Heart right ventricle (tissue), 16 donors: ENCODE measurements at regions of chr5 and their contacts with region 1.

Region 1: DNA sequence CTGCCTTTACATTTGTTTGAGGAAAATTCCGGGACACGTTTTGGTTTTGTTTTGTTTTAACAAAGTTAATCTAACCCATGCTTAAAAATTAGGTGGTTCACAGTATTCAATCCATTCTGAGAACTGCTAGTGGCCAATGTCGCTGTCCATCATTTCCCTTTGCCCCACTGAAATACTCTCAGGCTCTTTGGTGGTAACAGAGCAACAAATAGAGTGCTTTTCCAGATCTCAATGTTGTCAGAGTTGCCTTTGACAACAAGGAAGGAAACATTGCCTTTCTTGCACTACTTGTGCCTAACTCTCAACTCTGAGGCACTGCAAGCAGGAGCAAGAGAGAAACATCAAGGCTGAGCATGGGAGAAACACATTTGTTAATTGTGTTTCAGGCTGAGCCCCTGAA is 154.0 kb downstream of the MCTP1 start:
- DNase-seq: peak in 1 of 2 donors; percentile 57
- ATAC-seq: peak in 7 of 8 donors; percentile 35 to 85 (median 76)
- H3K4me3 ChIP-seq: no peak overlapping the region
- H3K27ac ChIP-seq: peak overlapping the region in 2 of 10 donors; percentile 18 to 43
- H3K4me1 ChIP-seq: no peaks in the 10 kb centered on the region
- H3K27me3 ChIP-seq: no peaks in the 10 kb centered on the region
- CTCF ChIP-seq: no peak

Region 2: DNA sequence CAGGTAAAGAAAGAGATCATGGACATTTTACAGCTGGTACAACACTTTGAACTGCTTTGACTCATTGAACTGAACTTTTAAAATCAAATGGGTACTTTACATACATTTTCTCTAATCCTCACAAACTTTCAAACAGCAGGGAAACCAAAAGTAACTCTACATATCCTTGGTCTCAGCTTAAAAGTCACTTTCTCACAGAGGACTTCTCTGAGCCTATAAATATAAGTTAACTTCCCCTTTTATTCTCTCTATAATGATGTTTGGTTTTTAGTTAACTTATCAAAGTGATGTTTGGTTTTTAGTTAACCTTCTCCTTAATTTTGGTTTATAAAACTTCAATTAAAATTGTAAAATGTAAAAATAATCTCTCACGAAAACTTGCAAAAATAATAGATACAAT is 55.8 kb before region 1 on chr5:
- intact Hi-C with region 1: loop called in 1 of 10 experiments (anchors 5 kb)
- DNase-seq: no peak
- ATAC-seq: no peak
- H3K4me3 ChIP-seq: no peak overlapping the region
- H3K27ac ChIP-seq: no peak overlapping the region
- H3K4me1 ChIP-seq: peaks cover 0 to 58% (median 4%) of the 10 kb centered on the region in 9 donors
- H3K27me3 ChIP-seq: no peaks in the 10 kb centered on the region
- CTCF ChIP-seq: no peak

Region 3: GRCh38 chr5:95087816-95088317 is 43.1 kb before region 1 on chr5:
- intact Hi-C with region 1: loop called in 1 of 10 experiments (anchors 5 kb)
- DNase-seq: no peak
- ATAC-seq: peak in 7 of 8 donors; percentile 18 to 76 (median 45)
- H3K4me3 ChIP-seq: no peak overlapping the region
- H3K27ac ChIP-seq: peak overlapping the region in 2 of 10 donors; percentile 37 to 42
- H3K4me1 ChIP-seq: no peaks in the 10 kb centered on the region
- H3K27me3 ChIP-seq: no peaks in the 10 kb centered on the region
- CTCF ChIP-seq: no peak

Region 4: GRCh38 chr5:95487880-95488279 is 356.9 kb after region 1 on chr5:
- intact Hi-C with region 1: no loop called
- DNase-seq: no peak
- ATAC-seq: no peak
- H3K4me3 ChIP-seq: no peak overlapping the region
- H3K27ac ChIP-seq: no peak overlapping the region
- H3K4me1 ChIP-seq: no peaks in the 10 kb centered on the region
- H3K27me3 ChIP-seq: no peaks in the 10 kb centered on the region
- CTCF ChIP-seq: no peak